A673 (cell line): ENCODE measurements at regions of chr10 and their contacts with region 1.

Region 1: GRCh38 chr10:23702977-23703414 is 264.1 kb downstream of the OTUD1 start:
- DNase-seq: peak; percentile 90
- H3K4me3 ChIP-seq: peak overlapping the region; percentile 37
- H3K27ac ChIP-seq: no peak overlapping the region
- H3K4me1 ChIP-seq: peaks cover 8% of the 10 kb centered on the region
- H3K27me3 ChIP-seq: no peaks in the 10 kb centered on the region
- CTCF ChIP-seq: peak; percentile 90

Region 2: GRCh38 chr10:23293145-23293724 is 409.8 kb before region 1 on chr10:
- CTCF ChIA-PET with region 1: no interaction called
- POLR2A ChIA-PET with region 1: no interaction called
- intact Hi-C with region 1: loop called (anchors 5 kb)
- DNase-seq: peak; percentile 83
- H3K4me3 ChIP-seq: no peak overlapping the region
- H3K27ac ChIP-seq: no peak overlapping the region
- H3K4me1 ChIP-seq: peaks cover 7% of the 10 kb centered on the region
- H3K27me3 ChIP-seq: no peaks in the 10 kb centered on the region
- CTCF ChIP-seq: peak; percentile 83

Region 3: DNA sequence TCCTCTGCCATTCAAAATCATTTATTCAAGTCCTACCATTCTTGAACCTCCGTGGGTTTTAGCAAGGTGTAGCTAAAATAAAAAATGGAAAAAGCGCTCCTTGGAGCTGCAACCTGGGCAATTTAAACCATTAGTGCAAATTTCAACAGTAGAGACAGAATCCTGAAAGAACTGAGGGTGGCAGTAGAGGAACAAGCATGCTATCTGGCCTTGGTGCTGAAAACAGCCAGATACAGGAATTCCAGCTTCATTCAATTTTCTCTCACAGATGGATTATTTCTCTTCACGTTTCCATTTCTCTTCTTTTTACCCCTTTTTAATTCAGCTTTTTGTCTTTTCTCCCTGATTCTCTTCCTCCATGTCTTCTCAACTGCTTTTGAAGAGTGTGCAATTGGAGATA is 186.5 kb before region 1 on chr10:
- CTCF ChIA-PET with region 1: no interaction called
- POLR2A ChIA-PET with region 1: no interaction called
- intact Hi-C with region 1: loop called (anchors 1 kb)
- DNase-seq: peak; percentile 61
- H3K4me3 ChIP-seq: no peak overlapping the region
- H3K27ac ChIP-seq: no peak overlapping the region
- H3K4me1 ChIP-seq: peaks cover 18% of the 10 kb centered on the region
- H3K27me3 ChIP-seq: no peaks in the 10 kb centered on the region
- CTCF ChIP-seq: peak; percentile 78

Region 4: DNA sequence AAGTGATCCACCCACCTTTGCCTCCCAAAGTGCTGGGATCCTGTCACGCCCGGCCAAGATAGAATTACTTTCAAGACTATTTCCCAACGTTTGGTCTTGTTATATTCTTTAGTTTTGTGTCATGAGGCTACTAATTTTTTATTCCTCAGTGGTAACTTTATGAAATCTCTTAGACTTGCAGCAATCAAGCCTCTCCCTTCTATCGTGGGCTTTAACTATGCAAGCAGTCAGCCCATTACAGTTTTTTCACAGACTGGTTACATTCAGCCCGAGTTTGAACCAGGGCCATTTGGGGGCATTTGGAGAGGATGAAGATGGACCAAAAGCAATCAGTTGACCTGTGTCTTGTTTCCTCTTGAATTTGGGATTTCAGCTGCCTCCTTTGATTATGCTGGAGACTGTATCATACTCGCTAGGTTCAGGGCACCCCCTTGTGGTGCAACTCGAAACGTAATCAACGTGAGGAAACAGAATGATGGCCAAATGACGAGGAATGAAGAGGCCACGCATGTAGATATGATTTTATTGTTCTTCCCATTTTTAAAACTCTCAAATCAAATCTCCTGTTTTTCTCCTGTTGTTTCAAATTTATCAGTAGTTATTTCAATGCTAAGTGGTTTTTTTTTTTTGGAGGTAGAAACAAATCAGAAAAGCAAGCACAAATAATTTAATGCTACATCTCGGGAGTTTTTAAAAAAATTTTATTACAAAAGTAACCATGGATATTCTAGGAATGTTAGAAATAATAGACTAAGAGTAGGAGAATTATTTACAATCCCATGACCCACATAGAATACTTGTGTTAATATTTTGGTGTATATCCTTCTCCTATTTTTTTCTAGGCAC is 657.5 kb after region 1 on chr10:
- CTCF ChIA-PET with region 1: no interaction called
- POLR2A ChIA-PET with region 1: no interaction called
- intact Hi-C with region 1: loop called (anchors 10 kb)
- DNase-seq: peak; percentile 90
- H3K4me3 ChIP-seq: no peak overlapping the region
- H3K27ac ChIP-seq: peak overlapping the region; percentile 8
- H3K4me1 ChIP-seq: peaks cover 63% of the 10 kb centered on the region
- H3K27me3 ChIP-seq: no peaks in the 10 kb centered on the region
- CTCF ChIP-seq: peak; percentile 87